Kidney (tissue), 22 donors: ENCODE measurements at regions of chr5 and their contacts with region 1.

Region 1: GRCh38 chr5:169019871-169020501 is 281.0 kb downstream of the SLIT3 start:
- DNase-seq: peak in 2 of 5 donors; percentile 46 to 70
- H3K4me3 ChIP-seq: no peak overlapping the region
- H3K27ac ChIP-seq: no peak overlapping the region
- H3K4me1 ChIP-seq: no peaks in the 10 kb centered on the region
- H3K27me3 ChIP-seq: no peaks in the 10 kb centered on the region
- CTCF ChIP-seq: no peak

Region 2: GRCh38 chr5:169064093-169064492 is 44.1 kb after region 1 on chr5:
- intact Hi-C with region 1: loop called (anchors 10 kb)
- DNase-seq: peak in 3 of 5 donors; percentile 65 to 94 (median 86)
- H3K4me3 ChIP-seq: no peak overlapping the region
- H3K27ac ChIP-seq: no peak overlapping the region
- H3K4me1 ChIP-seq: peaks cover 12 to 19% (median 16%) of the 10 kb centered on the region in 3 donors
- H3K27me3 ChIP-seq: no peaks in the 10 kb centered on the region
- CTCF ChIP-seq: no peak

Region 3: DNA sequence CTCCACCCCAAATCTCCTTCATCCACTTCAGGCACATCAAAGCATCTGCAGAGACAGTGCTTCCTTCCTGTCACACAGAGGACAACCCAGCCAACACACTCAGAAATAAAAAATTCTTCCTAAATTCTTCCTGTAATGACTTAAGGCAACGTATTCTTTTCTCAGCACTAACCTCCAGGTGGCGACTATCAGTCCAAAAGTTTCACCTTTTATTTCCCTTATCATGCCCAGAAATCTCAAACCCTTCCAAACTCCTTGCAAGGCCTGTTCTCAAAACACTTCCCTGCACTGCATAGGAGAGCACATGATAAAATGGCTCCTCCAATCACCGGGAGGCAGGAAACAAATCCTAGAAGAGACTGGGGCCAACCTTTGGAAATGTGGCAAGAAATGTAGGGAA is 245.9 kb after region 1 on chr5:
- intact Hi-C with region 1: no loop called
- DNase-seq: no peak
- H3K4me3 ChIP-seq: no peak overlapping the region
- H3K27ac ChIP-seq: no peak overlapping the region
- H3K4me1 ChIP-seq: peaks cover 0 to 3% (median 0%) of the 10 kb centered on the region in 3 donors
- H3K27me3 ChIP-seq: no peaks in the 10 kb centered on the region
- CTCF ChIP-seq: no peak